Activated naive CD4-positive, alpha-beta T cell treated with anti-CD3 and anti-CD28 coated beads for 36 hours (primary cell): ENCODE measurements at regions of chr1 and their contacts with region 1.

Region 1: GRCh38 chr1:65419681-65420589 is 533 bp upstream of the LEPR start:
- DNase-seq: peak; percentile 99
- H3K4me3 Mint-ChIP-seq: no peak overlapping the region
- H3K27ac Mint-ChIP-seq: peak overlapping the region; percentile 89
- H3K4me1 Mint-ChIP-seq: peaks cover 20% of the 10 kb centered on the region
- H3K27me3 Mint-ChIP-seq: no peaks in the 10 kb centered on the region

Region 2: GRCh38 chr1:65002508-65003315 is 417.2 kb before region 1 on chr1:
- CTCF ChIA-PET with region 1: no interaction called
- intact Hi-C with region 1: loop called (anchors 2 kb)
- DNase-seq: peak; percentile 81
- H3K4me3 Mint-ChIP-seq: peak overlapping the region; percentile 82
- H3K27ac Mint-ChIP-seq: peak overlapping the region; percentile 88
- H3K4me1 Mint-ChIP-seq: peaks cover 35% of the 10 kb centered on the region
- H3K27me3 Mint-ChIP-seq: no peaks in the 10 kb centered on the region

Region 3: GRCh38 chr1:65209005-65209885 is 210.7 kb before region 1 on chr1:
- CTCF ChIA-PET with region 1: no interaction called
- intact Hi-C with region 1: loop called (anchors 1 kb)
- DNase-seq: peak; percentile 28
- H3K4me3 Mint-ChIP-seq: no peak overlapping the region
- H3K27ac Mint-ChIP-seq: no peak overlapping the region
- H3K4me1 Mint-ChIP-seq: peaks cover 23% of the 10 kb centered on the region
- H3K27me3 Mint-ChIP-seq: peaks cover 3% of the 10 kb centered on the region

Region 4: DNA sequence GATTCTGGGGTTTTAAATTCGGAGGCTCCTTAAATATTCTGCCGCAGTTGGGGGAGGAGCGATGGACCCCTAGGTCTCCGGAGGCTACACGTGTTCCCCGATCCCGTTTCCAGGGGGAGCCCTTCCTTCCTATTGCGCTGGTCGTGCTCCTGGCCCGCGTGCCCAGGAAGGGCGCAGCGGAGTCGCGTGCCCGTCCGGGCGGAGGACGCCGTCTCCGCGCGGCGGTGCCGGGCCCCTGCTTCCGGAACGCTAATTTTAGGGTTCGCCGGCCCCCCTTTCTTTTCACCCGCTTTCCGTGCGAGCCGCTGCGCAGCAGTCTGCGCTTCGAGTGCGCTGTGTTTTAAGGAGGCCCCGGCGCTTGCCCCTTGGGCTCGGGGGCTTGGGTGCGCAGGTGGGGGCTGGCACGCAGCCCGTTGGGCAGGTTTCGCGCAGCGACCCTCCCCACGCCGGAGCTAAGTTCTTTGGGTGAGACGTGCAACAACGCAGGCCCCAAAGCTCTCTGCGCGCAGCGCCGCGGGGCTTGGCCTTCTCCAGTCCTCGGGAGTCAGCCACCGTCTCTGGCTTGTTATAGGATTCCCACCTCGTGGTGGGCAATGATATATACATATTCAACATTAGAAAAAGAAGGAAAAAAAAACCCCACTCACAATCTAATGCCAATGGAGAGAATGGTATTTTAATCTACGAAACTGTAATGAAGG is 154.1 kb before region 1 on chr1:
- CTCF ChIA-PET with region 1: no interaction called
- intact Hi-C with region 1: loop called (anchors 1 kb)
- DNase-seq: peak; percentile 35
- H3K4me3 Mint-ChIP-seq: peak overlapping the region; percentile 35
- H3K27ac Mint-ChIP-seq: no peak overlapping the region
- H3K4me1 Mint-ChIP-seq: peaks cover 27% of the 10 kb centered on the region
- H3K27me3 Mint-ChIP-seq: peaks cover 16% of the 10 kb centered on the region

Region 5: GRCh38 chr1:65703853-65704252 is 283.9 kb after region 1 on chr1:
- CTCF ChIA-PET with region 1: no interaction called
- intact Hi-C with region 1: no loop called
- DNase-seq: no peak
- H3K4me3 Mint-ChIP-seq: no peak overlapping the region
- H3K27ac Mint-ChIP-seq: no peak overlapping the region
- H3K4me1 Mint-ChIP-seq: no peaks in the 10 kb centered on the region
- H3K27me3 Mint-ChIP-seq: peaks cover 13% of the 10 kb centered on the region

Region 6: DNA sequence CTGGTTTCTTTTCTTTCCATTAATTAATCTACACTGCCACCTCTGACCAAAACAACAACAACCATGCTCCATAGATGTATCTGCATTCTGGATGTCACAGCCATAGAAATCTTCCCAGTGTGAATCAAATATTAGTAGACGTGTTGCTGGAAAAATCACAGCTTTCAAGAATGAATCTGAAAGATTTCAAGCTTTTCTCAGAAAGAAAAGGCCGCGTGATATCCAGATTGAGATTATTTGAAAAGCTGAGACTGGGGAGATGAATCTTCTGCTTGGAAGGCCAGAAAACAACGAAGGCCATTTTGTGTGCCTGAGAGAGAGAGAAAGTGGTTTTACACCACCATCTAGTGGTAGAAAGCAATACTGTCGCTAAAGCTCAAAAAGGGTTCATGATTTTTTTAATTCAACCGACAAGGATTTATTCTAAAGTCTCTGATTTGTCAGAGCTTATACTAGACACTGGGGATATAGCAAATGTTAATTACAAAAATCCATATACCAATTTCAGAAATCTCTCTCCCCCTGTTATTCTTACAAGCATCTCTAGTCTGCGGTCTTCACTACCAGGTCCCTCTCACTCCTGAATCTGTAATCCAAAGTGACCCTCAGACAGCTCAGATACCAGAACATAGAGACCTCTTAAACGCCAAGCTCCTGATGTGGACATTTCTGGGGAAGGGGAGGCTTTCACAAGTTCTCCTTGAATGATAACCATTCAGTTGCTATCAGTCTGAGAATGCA is 1026.5 kb after region 1 on chr1:
- CTCF ChIA-PET with region 1: no interaction called
- intact Hi-C with region 1: loop called (anchors 5 kb)
- DNase-seq: peak; percentile 45
- H3K4me3 Mint-ChIP-seq: peak overlapping the region; percentile 74
- H3K27ac Mint-ChIP-seq: peak overlapping the region; percentile 92
- H3K4me1 Mint-ChIP-seq: peaks cover 26% of the 10 kb centered on the region
- H3K27me3 Mint-ChIP-seq: peaks cover 5% of the 10 kb centered on the region